ENCODE measurements at regions of chr11 and their contacts with region 1.

Region 1: DNA sequence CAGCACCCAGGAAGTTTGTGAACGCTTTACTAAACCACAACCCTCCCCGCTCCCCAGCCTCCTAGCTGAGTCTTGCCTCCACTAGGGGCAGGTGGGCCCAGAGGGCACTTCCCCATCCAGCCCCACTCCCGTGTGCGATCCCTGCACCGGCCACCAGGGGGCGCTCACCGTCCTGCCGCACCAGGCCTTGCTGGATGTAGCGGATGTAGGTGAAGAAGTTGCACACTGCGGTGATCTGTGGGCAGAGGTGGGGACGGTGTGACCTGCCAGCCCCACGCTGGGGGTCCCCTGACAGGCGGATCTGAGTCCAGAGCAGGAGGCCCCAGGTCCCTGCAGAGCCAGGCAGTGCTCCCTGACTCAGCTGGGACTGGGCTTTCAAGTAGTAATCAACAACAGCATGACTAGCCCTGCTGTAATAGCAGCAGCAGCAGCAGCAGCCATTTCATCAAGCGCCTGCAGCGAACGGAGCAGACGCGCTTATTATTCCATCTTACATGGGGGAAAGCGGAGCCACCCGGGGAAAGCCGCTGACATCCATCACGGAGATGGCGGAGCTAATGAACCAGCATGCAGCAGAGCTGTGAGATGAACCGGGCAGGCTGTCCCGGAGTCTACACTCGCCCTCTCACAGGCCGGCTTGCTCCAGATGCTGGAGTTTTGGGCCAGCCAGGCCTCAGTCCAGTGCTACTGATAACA is 7.9 kb upstream of the FADS3 start:
- DNase-seq: peak; percentile 73 to 90
- H3K4me3 ChIP-seq: no peak overlapping the region
- H3K27ac ChIP-seq: no peak overlapping the region
- H3K4me1 ChIP-seq: no peaks in the 10 kb centered on the region; the same call in 1 of the 2 replicates
- H3K27me3 ChIP-seq: no peaks in the 10 kb centered on the region
- CTCF ChIP-seq: peak; percentile 100

Region 2: DNA sequence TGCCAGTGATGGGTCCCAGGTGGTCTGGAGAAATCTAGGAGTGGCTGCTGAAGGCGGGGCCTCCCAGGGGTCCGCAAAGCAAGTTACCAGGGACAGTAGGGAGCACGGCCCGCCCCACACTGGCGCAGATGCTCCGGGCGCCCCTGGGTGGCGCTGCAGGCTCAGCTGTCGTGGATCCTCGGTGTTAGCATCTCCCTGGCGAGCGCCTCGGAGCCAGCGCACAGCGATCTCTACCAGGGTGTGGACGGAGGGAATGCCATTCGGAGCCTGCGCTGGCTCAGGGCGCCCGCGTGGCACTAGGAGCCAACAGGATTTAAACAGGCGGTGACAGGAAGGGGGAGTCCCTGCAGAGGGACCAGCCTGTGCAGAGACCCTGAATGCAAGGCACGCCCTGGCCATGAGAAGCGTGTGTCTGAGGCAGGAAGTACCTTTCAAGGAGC is 28.1 kb before region 1 on chr11:
- CTCF ChIA-PET with region 1: interaction called, 8 read pairs
- POLR2A ChIA-PET with region 1: interaction called, 3 read pairs
- intact Hi-C with region 1: loop called (anchors 1 kb)
- DNase-seq: peak; percentile 65 to 89
- H3K4me3 ChIP-seq: no peak overlapping the region
- H3K27ac ChIP-seq: no peak overlapping the region
- H3K4me1 ChIP-seq: 0 out of 2 replicates have a peak, but pooled peaks cover 3% of the 10 kb centered on the region
- H3K27me3 ChIP-seq: no peaks in the 10 kb centered on the region
- CTCF ChIP-seq: peak; percentile 97

Region 3: GRCh38 chr11:62054484-62055121 is 155.3 kb after region 1 on chr11:
- CTCF ChIA-PET with region 1: interaction called, 6 read pairs
- POLR2A ChIA-PET with region 1: no interaction called
- intact Hi-C with region 1: loop called (anchors 1 kb)
- DNase-seq: peak; percentile 80 to 95
- H3K4me3 ChIP-seq: no peak overlapping the region; the same call in 1 of the 2 replicates
- H3K27ac ChIP-seq: peak overlapping the region; percentile 85
- H3K4me1 ChIP-seq: peaks cover 53% of the 10 kb centered on the region
- H3K27me3 ChIP-seq: no peaks in the 10 kb centered on the region
- CTCF ChIP-seq: peak; percentile 89

Region 4: GRCh38 chr11:62081378-62082291 is 182.3 kb after region 1 on chr11:
- CTCF ChIA-PET with region 1: interaction called, 36 read pairs
- POLR2A ChIA-PET with region 1: no interaction called
- intact Hi-C with region 1: loop called (anchors 1 kb)
- DNase-seq: peak; percentile 66 to 82
- H3K4me3 ChIP-seq: no peak overlapping the region
- H3K27ac ChIP-seq: no peak overlapping the region
- H3K4me1 ChIP-seq: no peaks in the 10 kb centered on the region
- H3K27me3 ChIP-seq: no peaks in the 10 kb centered on the region
- CTCF ChIP-seq: peak; percentile 98

Region 5: DNA sequence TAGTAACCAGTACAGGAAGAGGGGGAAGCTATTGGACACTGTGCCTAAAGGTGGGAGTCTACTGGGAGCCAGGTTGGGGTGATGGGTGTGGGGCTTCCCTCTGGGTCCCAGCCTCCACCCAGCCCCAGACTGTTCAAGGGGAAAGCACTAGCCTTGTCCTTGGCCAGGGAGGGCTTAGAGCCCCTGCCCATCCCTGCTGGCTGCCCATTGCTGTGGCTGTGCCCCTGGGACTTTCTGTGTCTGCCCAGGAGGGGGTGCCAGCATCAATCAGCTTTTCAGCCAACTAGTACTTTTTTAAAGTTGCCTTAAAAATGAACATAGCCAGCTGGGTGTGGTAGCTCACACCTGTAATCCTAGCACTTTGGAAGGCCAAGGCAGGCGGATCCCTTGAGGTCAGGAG is 244.4 kb after region 1 on chr11:
- CTCF ChIA-PET with region 1: no interaction called
- POLR2A ChIA-PET with region 1: no interaction called
- intact Hi-C with region 1: no loop called
- DNase-seq: no peak
- H3K4me3 ChIP-seq: no peak overlapping the region
- H3K27ac ChIP-seq: no peak overlapping the region
- H3K4me1 ChIP-seq: no peaks in the 10 kb centered on the region
- H3K27me3 ChIP-seq: no peaks in the 10 kb centered on the region
- CTCF ChIP-seq: no peak